KBM-7 (cell line): ENCODE measurements at regions of chr2 and their contacts with region 1.

Region 1: DNA sequence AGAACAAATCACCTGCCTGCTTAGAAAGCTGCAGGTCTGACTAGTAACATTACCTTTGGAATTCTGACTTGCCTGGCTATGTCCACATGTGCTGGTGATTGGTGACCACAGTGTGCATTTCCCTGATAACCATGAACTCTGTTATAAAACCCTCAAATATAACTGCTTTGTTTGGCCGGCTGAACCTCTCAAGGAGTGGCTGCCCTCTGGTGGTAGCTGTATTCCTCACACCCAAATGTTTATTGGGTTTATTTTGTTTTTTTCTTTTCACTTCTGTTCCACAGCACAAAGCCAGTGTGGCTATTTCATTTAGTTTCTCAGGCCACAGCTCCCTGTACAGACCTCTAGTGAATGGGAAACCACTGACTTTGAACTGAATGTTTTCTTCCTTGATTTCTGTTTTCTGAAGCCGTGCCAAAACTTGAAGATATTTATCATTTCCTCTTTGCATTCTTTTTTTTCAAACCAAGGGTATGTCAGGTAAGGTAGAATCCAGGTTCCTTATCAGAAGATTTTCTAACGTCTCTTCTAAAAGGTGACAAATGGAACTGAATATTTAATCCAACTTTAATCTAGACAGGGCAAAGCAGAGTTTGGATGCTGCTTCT is 549.0 kb upstream of the VRK2 start:
- DNase-seq: peak; percentile 73

Region 2: GRCh38 chr2:57376985-57377384 is 120.6 kb before region 1 on chr2:
- in situ Hi-C with region 1: loop called (anchors 25 kb)
- DNase-seq: peak; percentile 55

Region 3: DNA sequence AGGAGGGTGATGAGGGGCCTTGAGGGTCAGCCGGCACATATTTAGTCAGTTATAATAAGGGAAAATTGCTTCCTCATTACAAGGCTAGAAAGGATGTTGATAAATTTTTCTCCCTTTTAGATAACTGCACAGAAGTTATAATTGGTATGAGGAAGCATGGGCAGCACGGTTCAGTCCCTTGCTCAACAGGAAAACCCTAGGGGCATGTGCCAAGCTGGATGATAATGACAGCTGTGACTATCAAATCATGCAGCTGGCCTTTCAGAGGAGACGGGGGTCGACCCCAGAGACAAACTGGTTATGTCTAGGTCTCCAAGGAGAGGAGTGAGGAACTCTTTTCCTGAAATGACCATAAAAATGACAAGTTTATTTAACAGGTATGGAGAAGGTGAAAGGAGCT is 101.0 kb after region 1 on chr2:
- in situ Hi-C with region 1: no loop called
- DNase-seq: peak; percentile 59